ENCODE measurements at regions of chr6 and their contacts with region 1.

Region 1: DNA sequence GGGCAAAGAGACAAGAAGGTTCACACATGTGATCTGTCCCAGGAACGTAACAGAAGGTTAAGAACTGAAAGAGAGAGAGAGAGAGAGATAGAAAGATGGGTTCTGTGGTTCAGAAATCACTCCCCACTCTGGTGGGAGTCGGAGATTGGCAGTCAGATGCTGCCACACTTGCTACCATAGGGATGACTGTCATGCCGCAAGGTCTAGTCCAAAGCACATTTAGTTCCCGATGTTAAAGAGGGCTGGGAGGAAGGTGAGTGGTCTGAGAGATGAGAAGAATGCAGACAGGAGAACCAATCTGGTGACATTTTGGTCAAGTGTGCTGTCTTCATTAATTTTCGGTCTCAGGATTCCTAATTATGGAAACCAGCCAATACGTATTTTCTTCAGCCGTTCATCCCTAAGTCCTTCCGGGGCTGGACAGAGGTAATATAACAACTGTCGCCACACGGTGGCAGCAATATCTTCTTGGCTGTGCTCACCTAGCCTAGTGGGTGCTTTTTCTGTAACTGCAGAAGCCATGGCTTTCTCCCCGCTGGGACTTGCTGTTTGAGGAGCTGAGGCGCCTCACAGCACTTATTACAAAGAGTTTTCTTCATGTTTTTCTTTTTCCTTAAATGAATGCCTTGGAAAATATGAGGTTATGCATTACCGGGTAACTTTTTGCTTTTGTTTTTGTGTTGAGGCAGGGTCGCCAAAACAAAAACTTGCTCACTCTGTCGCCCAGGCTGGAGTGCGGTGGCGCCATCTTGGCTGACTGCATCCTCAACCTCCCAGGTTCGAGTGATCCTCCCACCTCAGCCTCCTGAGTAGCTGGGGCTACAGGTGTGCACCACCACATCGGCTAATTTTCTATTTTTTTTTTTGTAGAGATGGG is 46.0 kb downstream of the SLC35D3 start:
- DNase-seq: peak; percentile 46
- H3K4me3 Mint-ChIP-seq: no peak overlapping the region
- H3K27ac Mint-ChIP-seq: no peak overlapping the region
- H3K4me1 Mint-ChIP-seq: peaks cover 9% of the 10 kb centered on the region
- H3K27me3 Mint-ChIP-seq: peaks cover 43% of the 10 kb centered on the region

Region 2: GRCh38 chr6:136846046-136846445 is 122.1 kb before region 1 on chr6:
- intact Hi-C with region 1: loop called (anchors 2 kb)
- DNase-seq: no peak
- H3K4me3 Mint-ChIP-seq: no peak overlapping the region
- H3K27ac Mint-ChIP-seq: no peak overlapping the region
- H3K4me1 Mint-ChIP-seq: no peaks in the 10 kb centered on the region
- H3K27me3 Mint-ChIP-seq: no peaks in the 10 kb centered on the region

Measured in activated T-helper 1 cell treated with anti-CD3 and anti-CD28 coated beads, Interleukin-12 subunit alpha, Interleukin-12 subunit beta, Interleukin-2, Interleukin-4 antibody, amounts not matched to agents 30 ng/mL and 10 ng/mL and 1 ng/mL, durations not matched to agents 14 hours and 24 hours and 36 hours (primary cell).